AG04449 (cell line): ENCODE measurements at regions of chr17 and their contacts with region 1.

Region 1: DNA sequence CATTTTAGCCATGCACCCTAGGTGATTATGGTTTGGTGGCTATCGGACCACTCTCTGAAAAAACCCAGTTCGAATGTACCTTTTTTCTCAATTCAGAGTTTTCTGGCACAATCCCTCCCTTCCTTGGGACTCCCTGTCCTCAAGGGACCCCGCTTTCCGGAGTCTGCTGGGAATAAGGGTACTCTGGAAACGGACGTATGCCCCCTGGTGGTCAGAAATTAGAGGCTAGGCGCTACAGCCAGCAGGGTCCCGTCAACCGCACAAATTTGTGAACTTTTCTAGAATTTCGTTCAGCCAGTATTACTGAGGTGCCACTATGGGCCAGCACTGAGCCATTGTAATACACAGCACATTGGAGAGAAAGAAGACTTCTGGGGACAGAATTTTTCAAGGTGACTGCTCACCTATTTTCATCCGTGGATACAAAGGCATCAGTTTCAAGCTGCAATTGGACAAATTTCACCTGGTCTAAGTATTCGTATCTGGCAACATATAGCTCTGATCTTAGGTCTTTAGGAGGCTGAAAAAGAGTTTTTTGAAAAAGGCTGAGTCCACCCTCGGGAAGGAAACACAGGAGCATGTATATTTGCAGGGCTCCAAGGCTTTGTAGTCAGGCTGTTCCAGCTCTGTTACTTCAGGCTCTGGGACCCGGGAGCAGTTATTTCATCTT is 27.1 kb upstream of the CRYBA1 start:
- DNase-seq: no peak
- H3K4me3 ChIP-seq: no peak overlapping the region
- CTCF ChIP-seq: peak; percentile 87

Region 2: DNA sequence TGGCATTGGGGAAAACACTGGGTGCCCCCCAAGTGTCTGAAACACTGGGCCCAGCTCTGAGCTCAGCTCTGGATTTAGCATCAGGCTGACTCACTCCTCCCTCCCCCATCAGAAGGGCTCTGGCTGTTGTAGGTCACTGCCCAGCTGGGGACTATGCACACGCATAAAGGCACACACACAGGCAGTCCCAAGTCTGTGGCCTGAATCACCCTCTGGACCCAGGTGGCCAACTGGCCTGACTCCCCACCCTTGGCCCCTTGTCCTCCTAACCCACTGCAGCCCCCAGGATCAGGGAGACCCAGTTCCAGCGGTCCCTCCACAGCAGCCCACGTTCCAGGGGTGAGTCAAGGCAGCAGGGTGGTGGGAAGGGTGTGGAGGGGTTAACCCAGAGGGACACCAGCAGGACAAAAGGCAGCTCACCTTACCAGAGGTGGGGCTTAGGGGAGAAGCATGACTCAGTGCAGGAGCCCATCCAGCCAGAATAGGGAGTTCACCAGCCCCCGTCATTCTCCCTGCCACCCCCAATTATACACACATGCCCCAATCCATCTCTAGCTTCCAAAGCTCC is 86.3 kb before region 1 on chr17:
- CTCF ChIA-PET with region 1: interaction called, 454 read pairs
- POLR2A ChIA-PET with region 1: no interaction called
- DNase-seq: no peak
- H3K4me3 ChIP-seq: no peak overlapping the region
- CTCF ChIP-seq: no peak

Region 3: GRCh38 chr17:29180034-29180787 is 39.3 kb before region 1 on chr17 and contains the start of gene MYO18A:
- CTCF ChIA-PET with region 1: interaction called, 393 read pairs
- POLR2A ChIA-PET with region 1: no interaction called
- DNase-seq: no peak
- H3K4me3 ChIP-seq: peak within 1 kb of the TSS; percentile 65
- CTCF ChIP-seq: peak; percentile 94

Region 4: DNA sequence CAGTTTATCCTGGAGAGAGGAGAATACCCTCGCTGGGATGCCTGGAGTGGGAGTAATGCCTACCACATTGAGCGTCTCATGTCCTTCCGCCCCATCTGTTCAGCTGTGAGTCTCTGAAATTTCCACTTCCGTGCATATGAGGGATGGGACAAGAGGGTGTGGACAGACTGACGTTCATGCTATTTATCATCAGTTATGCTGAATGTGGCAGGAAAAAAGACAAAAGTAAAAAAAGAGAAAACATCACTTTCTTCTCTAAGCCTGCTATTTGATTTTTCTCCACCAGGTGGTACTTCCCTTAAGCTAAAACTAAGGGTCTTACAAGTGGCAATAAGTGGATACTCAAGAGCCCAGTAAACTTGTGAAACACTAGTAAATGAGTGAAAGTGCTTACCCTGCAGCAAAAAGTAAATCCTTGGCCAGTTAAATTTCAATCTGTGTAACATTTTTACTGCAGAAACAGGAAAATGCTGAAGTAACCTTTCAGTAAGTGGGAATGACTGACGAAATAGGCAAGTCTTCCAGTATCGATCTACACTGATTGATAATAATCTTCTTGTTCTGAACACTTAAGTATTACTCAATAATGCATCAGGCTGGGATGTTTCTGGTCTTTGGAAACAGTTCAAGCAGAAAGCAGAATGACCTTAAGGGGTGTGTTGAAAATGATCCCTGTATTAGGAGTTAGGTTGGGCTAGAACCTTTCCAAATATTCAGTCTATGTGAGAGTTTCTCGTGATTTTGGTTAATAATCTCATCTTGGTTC is 32.8 kb after region 1 on chr17:
- CTCF ChIA-PET with region 1: interaction called, 60 read pairs
- POLR2A ChIA-PET with region 1: no interaction called
- DNase-seq: no peak
- H3K4me3 ChIP-seq: no peak overlapping the region
- CTCF ChIP-seq: no peak